ENCODE measurements at regions of chr19 and their contacts with region 1.

Region 1: DNA sequence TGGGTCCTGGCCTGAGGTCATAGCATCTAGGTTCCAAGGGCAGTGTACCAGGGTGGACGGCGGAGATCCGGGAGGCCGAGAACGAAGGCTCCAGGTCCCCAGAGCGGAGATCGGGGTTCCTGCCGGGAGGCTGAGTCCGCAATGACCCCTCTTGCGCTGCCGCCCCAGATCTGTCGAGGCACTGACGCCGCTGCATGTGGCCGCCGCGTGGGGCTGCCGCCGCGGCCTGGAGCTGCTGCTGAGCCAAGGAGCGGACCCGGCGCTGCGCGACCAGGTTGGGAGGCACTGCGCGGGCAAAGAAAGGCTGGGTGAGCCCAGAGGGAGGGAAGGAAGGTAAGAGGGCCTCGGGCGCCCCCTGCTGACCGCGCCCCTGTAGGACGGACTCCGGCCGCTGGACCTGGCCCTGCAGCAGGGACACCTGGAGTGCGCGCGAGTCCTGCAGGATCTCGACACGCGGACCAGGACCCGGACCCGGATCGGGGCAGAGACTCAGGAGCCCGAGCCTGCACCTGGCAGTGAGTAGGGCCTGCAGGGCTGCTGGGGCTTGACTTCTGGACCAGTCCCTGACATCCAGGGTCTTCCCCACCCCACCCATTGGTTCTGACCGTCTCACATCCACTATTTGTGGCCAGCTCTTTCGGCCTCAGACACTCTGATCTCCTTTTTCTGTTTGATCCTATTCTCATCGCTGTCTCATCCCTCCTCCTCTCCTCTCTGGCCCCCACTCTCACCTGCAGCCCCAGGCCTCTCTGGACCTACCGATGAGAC is 971 bp downstream of the ANKLE1 start:
- DNase-seq: peak; percentile 81
- H3K27ac ChIP-seq: no peak overlapping the region
- CTCF ChIP-seq: peak; percentile 98

Region 2: DNA sequence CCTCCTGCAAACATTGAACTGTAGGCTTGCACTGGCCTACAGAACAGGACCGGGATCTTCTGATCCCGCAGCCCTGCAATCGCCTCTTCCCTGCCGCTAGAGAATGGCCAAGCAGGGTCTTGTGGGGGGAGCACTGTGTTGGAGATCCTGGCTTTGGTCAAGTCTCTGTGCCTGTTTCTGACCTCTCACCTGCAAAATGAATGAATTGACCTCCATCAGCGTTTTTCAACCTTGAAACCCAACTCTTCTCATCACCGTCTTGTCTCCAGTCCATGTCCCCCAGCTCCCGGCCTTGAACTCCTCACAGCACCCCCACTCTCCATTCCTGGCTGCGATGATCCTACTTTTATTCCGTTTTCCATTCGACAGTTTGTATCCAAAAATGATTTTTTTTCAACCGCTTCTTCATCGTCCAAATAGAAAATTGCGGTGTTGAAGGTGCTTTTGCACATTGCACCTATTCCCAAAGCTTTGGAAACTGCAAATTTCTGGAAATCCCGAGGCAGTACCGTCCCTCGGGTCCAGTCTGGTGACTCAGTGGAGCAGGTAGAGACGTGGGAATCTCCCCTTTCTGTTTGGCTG is 205.1 kb before region 1 on chr19:
- CTCF ChIA-PET with region 1: interaction called, 10 read pairs
- POLR2A ChIA-PET with region 1: no interaction called
- DNase-seq: no peak
- H3K27ac ChIP-seq: peak overlapping the region; percentile 95
- CTCF ChIP-seq: no peak

Region 3: GRCh38 chr19:17156927-17157302 is 125.8 kb before region 1 on chr19:
- CTCF ChIA-PET with region 1: no interaction called
- POLR2A ChIA-PET with region 1: no interaction called
- DNase-seq: no peak
- H3K27ac ChIP-seq: no peak overlapping the region
- CTCF ChIP-seq: no peak

Region 4: GRCh38 chr19:17235618-17236377 is 46.9 kb before region 1 on chr19:
- CTCF ChIA-PET with region 1: interaction called, 12 read pairs
- POLR2A ChIA-PET with region 1: no interaction called
- DNase-seq: peak; percentile 51
- H3K27ac ChIP-seq: peak overlapping the region; percentile 94
- CTCF ChIP-seq: peak; percentile 76

Region 5: GRCh38 chr19:17305517-17306284 is 23.0 kb after region 1 on chr19 and contains the start of gene MRPL34:
- CTCF ChIA-PET with region 1: no interaction called
- POLR2A ChIA-PET with region 1: no interaction called
- DNase-seq: peak; percentile 96
- H3K27ac ChIP-seq: peak within 1 kb of the TSS; percentile 98
- CTCF ChIP-seq: peak; percentile 97

Measured in RWPE1 (cell line).